GM13976 (cell line): ENCODE measurements at regions of chr4 and their contacts with region 1.

Region 1: GRCh38 chr4:120156120-120156718 is 89.6 kb upstream of the MAD2L1 start:
- DNase-seq: peak; percentile 8
- CTCF ChIP-seq: peak; percentile 34

Region 2: DNA sequence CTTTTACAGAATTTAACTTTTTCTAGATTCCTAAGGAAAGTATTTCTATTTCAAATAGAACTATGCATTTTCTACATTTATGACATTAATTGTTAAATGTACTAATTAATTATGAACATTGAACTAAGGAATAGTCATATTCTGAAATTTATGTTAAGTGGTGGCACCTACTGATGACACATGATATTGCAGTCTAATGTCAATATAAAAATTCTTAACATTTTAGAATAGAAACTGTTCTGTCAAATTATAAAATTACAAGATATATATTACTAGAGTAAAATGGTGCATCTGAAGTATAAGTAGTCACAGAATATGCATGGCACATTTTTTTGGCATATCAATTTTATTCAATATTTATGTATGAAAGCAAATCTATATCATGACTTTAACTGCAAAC is 956.3 kb after region 1 on chr4:
- in situ Hi-C with region 1: loop called (anchors 25 kb)
- DNase-seq: no peak
- CTCF ChIP-seq: no peak